AG04450 (cell line): ENCODE measurements at regions of chr1 and their contacts with region 1.

Region 1: DNA sequence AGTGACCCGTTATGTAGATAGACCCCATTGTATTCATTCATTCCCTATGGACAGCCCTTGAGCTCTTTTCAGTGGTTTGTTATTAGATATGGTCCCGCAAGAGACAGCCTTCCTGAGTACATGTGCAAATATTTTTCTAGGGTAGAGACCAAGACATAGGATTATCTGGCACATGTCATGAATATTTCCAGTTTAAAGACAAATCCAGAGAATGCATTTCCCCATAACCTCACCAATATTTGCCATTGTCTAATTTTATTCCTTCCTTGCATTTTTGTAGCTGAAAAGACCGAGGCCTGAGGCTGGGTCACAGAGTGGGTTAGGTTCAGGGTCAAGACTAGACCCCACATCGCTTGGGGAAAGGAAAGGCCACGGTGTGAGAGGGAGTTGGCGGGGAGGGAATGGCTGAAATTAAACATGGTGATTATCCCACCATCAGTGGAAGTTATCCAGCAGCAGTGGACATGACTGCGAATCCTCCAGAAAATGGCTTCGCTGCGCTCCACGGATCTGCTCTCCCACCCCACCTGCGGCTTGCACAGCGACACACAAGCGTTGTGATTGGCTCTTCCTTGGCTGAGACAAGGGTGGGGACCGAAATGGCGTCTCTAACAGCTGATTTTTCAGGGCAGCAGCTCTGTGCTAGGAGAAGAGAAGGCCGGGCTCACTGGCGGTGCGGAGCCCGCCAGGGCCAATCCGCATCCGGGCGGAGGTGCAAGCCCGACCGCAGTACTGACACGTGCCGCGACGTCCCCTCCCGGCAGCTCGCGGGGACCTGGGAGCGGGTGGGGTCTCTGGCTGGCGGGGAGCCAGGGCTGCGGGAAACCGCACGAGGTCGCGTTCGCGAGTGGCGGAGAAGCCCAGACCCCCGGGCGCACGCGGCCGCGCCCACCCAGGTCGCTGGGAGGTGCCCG is 16.1 kb upstream of the STMN1 start:
- DNase-seq: no peak
- H3K4me3 ChIP-seq: peak overlapping the region; percentile 59
- H3K27ac ChIP-seq: no peak overlapping the region
- H3K27me3 ChIP-seq: peaks cover 4% of the 10 kb centered on the region
- CTCF ChIP-seq: no peak

Region 2: GRCh38 chr1:24673336-24673735 is 1249.0 kb before region 1 on chr1:
- CTCF ChIA-PET with region 1: no interaction called
- POLR2A ChIA-PET with region 1: interaction called, 12 read pairs
- DNase-seq: no peak
- H3K4me3 ChIP-seq: no peak overlapping the region
- H3K27ac ChIP-seq: no peak overlapping the region
- H3K27me3 ChIP-seq: no peaks in the 10 kb centered on the region
- CTCF ChIP-seq: no peak

Region 3: GRCh38 chr1:26035959-26036755 is 113.8 kb after region 1 on chr1:
- CTCF ChIA-PET with region 1: no interaction called
- POLR2A ChIA-PET with region 1: no interaction called
- DNase-seq: peak; percentile 23
- H3K4me3 ChIP-seq: peak overlapping the region; percentile 85
- H3K27ac ChIP-seq: no peak overlapping the region
- H3K27me3 ChIP-seq: peaks cover 12% of the 10 kb centered on the region
- CTCF ChIP-seq: peak; percentile 95